Posterior cingulate gyrus (tissue), 11 donors: ENCODE measurements at regions of chr10 and their contacts with region 1.

Region 1: DNA sequence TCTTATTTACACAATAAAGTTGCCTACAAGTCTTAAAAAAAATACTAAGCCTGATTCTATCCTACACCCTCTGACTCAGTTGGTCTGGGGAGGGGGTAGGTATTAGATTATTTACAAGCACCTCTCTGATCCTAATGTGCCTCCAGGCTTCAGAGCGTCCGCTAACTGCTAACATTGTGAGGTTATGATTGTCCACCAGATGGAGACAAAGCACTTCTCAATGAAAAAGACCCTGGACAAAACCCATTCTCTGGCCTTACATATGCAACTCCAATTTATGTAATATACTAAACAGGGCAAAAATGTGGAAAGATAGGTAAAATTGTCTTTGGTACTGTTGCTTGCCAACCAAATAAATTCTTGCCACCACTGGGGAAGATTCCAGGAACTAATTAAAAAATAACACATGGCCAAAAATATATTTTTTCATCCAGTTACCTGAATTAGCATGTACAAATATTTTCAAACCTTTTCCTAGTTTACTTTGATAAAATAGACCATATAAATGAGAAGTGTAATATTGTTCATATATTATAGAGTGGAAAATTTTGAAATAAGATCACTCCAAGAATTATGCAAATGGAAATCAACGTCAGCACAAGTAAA is 92.4 kb downstream of the KIF20B start:
- DNase-seq: peak in 1 of 10 donors; percentile 21

Region 2: GRCh38 chr10:89516149-89516832 is 277.5 kb before region 1 on chr10:
- intact Hi-C with region 1: no loop called
- DNase-seq: no peak

Region 3: DNA sequence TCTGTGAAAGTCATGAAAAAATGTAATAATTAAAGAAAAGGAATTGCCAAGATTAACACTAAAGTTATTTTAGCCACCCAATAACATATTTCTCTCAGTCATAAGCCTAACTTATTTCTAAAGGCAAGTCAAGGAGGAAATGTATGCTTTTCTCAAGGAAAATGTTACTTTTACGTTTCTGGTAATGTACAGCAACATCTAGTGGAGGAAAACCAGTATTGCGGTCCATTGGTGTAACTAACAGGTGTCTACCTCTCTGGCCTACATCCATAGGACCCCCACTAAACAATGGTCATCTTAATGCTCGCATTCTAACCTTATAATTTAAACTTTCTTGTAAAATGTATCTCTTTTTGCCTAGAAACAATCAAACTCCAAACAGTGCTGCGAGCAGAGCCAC is 345.1 kb after region 1 on chr10:
- intact Hi-C with region 1: loop called (anchors 5 kb)
- DNase-seq: no peak

Region 4: DNA sequence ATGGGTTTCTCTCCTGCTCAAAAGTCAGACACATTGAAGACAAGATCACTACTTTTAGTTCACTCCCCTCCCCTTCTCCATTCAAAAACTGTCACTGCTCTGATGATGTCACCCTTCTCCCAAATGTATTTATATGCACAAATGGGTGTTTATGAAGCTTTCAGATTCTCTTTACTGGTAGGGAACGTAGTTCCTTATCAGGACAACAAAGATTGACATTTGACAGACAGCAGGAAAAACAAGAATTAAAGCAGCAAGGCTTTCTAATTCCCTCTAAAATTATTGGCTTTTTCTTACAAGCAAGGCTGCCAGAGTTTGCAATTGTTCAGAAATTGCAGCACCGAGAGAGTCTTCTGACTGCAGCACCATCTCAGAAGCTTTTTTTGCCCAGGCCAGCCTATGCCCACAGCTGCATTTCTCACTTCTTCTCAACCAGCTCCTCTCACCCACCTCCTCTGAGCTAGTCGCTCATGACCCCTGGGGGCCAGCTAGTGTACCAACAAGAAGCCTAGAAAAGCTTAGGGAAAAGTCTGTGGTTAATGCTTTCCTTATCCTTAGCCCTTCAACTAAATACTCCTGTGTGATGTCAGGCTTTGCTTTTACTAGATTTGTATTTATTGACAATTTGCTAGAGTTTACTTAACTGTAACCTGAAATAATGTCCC is 799.0 kb after region 1 on chr10:
- intact Hi-C with region 1: loop called (anchors 10 kb)
- DNase-seq: peak in 9 of 10 donors; percentile 12 to 90 (median 30)

Region 5: GRCh38 chr10:90787393-90788198 is 993.8 kb after region 1 on chr10:
- intact Hi-C with region 1: loop called (anchors 10 kb)
- DNase-seq: peak in 2 of 10 donors; percentile 22 to 37

Region 6: GRCh38 chr10:90862908-90863514 is 1069.3 kb after region 1 on chr10:
- intact Hi-C with region 1: loop called (anchors 5 kb)
- DNase-seq: no peak